Activated naive CD8-positive, alpha-beta T cell treated with anti-CD3 and anti-CD28 coated beads, Interleukin-2, amount 10 ng/mL, durations not matched to agents 7 days and 5 days (primary cell): ENCODE measurements at regions of chr16 and their contacts with region 1.

Region 1: GRCh38 chr16:46830902-46831647 is at the start of gene C16orf87:
- DNase-seq: peak; percentile 94
- ATAC-seq: peak; percentile 94
- H3K4me3 Mint-ChIP-seq: peak within 1 kb of the TSS; percentile 100
- H3K27ac Mint-ChIP-seq: peak within 1 kb of the TSS; percentile 100
- H3K4me1 Mint-ChIP-seq: peaks cover 20% of the 10 kb centered on the region
- H3K27me3 Mint-ChIP-seq: peaks cover 19% of the 10 kb centered on the region
- total RNA-seq, gene C16orf87: 8.8 to 9.5 TPM

Region 2: DNA sequence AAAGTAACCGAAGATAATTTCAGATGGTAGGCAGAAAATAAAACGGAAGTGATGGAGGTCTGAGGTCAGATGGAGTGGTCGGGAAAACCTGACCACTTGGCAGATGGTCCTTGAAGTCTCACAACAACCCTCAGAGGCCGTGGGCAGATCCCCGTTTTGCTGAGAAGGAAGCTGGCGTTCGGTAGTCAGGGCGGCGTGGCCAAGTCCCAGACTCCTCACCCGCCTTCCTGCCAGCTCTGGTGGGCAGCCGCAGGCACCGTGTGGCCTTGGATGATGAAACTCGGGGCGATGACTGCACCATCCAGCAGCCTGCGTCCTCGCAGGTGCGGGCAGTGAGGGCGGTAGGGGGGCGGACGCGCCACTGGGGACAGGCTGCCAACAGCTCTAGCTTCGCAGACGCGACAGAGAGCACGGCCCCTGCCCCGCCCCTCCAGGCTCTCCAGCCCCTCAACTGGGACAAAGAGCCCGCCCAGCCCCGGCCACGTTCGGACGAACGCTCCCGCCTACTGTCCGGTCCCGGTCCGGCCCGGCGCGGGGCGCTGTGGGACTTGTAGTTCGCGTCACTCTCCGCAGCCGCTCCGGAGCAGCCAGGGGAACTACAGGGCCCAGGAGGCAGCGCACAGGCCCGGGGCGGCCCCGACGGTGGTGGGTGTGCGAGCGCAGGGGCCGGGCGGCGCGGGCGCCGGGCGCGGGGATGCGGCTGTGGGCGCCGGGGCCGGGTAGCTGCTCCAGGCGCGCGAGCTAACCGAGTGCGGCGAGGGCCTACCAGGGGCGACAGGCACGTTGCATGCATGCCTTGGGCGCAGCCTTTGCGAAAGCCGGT is 52.8 kb after region 1 on chr16 and contains the start of gene GPT2:
- POLR2A ChIA-PET with region 1: interaction called, 10 read pairs
- DNase-seq: peak; percentile 86
- ATAC-seq: peak; percentile 96
- H3K4me3 Mint-ChIP-seq: peak within 1 kb of the TSS; percentile 83
- H3K27ac Mint-ChIP-seq: peak within 1 kb of the TSS; percentile 65
- H3K4me1 Mint-ChIP-seq: peaks cover 12% of the 10 kb centered on the region
- H3K27me3 Mint-ChIP-seq: peaks cover 28% of the 10 kb centered on the region
- total RNA-seq, gene GPT2: 4.8 to 6.3 TPM